Panc1 (cell line): ENCODE measurements at regions of chr3 and their contacts with region 1.

Region 1: DNA sequence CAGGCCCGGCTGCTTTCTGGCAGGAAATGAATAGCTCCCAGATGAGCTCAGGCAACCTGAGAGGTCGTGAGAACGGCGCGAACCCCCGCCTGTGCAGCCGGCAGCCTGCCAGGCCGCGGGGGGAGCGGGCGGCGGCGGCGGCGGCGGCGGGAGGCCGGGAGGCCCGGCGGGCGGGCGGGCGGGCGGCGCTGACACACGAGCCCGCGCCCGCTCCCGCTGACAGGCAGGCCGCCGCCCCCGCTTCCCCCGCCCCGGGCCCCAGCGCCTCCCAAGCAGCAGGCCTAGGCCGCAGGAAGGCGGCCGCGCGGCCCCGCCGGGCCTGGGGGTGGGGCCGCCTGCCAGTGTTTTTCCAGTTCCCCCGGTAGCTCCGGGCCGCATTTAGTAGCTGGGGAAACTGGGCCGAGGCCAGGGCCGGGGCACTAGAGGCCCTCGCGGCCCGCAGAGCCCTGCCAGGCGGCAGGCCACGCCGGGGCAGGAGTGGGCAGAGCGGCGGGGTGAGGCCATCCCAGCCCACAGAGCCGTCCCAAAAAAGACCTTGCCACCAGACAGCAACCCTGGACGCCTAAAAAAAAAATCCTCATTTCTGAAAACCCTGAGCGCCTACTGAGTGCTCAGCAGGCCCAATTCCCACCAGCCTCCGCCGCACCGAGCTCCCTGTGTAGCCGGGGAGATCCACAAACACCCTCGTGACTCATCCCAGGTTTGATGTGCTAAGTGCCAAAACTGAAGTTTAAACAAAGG is 5.6 kb downstream of the HES1 start:
- DNase-seq: no peak
- ATAC-seq: peak; percentile 74
- H3K4me3 ChIP-seq: peak overlapping the region; percentile 44 to 59
- H3K27ac ChIP-seq: peak overlapping the region; percentile 100
- H3K4me1 ChIP-seq: peaks cover 40% of the 10 kb centered on the region
- H3K27me3 ChIP-seq: no peaks in the 10 kb centered on the region
- CTCF ChIP-seq: no peak

Region 2: DNA sequence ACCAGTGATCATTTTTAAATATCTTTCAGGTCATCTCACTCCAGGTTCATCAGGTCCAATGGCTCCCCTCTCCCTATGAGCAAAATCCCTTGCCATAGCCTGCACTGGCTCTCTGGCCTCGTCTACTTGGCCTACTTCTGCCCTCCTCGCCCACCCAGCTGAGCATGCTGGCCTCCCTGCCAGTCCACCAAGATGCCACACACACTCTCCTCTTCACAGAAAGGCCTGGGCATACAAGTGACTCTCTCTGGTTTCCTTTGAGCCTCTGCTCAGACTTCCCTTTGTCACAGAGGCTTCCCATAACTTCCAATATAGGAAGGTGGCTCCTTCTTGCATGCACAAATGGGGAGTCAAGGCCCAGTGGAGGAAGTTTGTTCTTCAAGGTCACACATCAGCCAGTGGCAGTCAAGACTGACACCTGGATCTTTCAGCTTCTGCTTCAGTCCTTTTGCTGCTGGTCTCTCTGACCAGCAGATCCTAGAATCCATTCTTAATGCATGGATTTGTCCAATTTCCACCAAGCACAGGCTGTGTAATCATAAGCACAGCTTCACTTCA is 228.9 kb before region 1 on chr3:
- CTCF ChIA-PET with region 1: no interaction called
- POLR2A ChIA-PET with region 1: interaction called, 10 read pairs
- in situ Hi-C with region 1: no loop called
- intact Hi-C with region 1: no loop called
- DNase-seq: no peak
- ATAC-seq: no peak
- H3K4me3 ChIP-seq: no peak overlapping the region
- H3K27ac ChIP-seq: no peak overlapping the region; the same call in 1 of the 2 replicates
- H3K4me1 ChIP-seq: peaks cover 12% of the 10 kb centered on the region; the same call in 1 of the 2 replicates
- H3K27me3 ChIP-seq: no peaks in the 10 kb centered on the region
- CTCF ChIP-seq: no peak

Region 3: GRCh38 chr3:194123726-194124125 is 17.9 kb before region 1 on chr3:
- CTCF ChIA-PET with region 1: no interaction called
- POLR2A ChIA-PET with region 1: no interaction called
- in situ Hi-C with region 1: no loop called
- intact Hi-C with region 1: no loop called
- DNase-seq: no peak
- ATAC-seq: no peak
- H3K4me3 ChIP-seq: no peak overlapping the region
- H3K27ac ChIP-seq: no peak overlapping the region
- H3K4me1 ChIP-seq: peaks cover 9% of the 10 kb centered on the region
- H3K27me3 ChIP-seq: no peaks in the 10 kb centered on the region
- CTCF ChIP-seq: no peak

Region 4: DNA sequence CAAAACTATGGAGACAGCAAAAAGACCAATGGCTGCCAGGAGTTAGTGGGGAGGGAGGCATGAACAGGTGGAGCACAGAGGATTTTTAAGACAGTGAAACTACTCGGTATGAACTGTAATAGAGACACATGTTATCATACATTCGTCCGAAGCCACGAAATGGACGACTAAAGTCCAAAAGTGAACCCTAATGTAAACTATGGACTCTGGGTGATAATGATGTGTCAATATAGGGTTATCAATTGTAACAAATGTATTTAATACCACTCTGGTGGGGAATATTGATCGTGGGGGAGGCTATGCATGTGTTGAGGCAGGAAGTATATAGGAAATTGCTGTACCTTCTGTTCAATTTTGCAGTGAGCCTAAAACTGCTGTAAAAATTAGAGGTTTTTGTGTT is 102.6 kb after region 1 on chr3:
- CTCF ChIA-PET with region 1: no interaction called
- POLR2A ChIA-PET with region 1: interaction called, 14 read pairs
- in situ Hi-C with region 1: no loop called
- intact Hi-C with region 1: no loop called
- DNase-seq: no peak
- ATAC-seq: no peak
- H3K4me3 ChIP-seq: no peak overlapping the region
- H3K27ac ChIP-seq: no peak overlapping the region
- H3K4me1 ChIP-seq: no peaks in the 10 kb centered on the region
- H3K27me3 ChIP-seq: no peaks in the 10 kb centered on the region
- CTCF ChIP-seq: no peak

Region 5: GRCh38 chr3:194315088-194315964 is 173.7 kb after region 1 on chr3:
- CTCF ChIA-PET with region 1: interaction called, 17 read pairs
- POLR2A ChIA-PET with region 1: interaction called, 13 read pairs
- in situ Hi-C with region 1: no loop called
- intact Hi-C with region 1: loop called (anchors 1 kb)
- DNase-seq: no peak
- ATAC-seq: peak; percentile 92
- H3K4me3 ChIP-seq: peak overlapping the region; percentile 37 to 73
- H3K27ac ChIP-seq: peak overlapping the region; percentile 73
- H3K4me1 ChIP-seq: peaks cover 19% of the 10 kb centered on the region
- H3K27me3 ChIP-seq: no peaks in the 10 kb centered on the region
- CTCF ChIP-seq: peak; percentile 99